Activated naive CD4-positive, alpha-beta T cell treated with anti-CD3 and anti-CD28 coated beads for 36 hours (primary cell): ENCODE measurements at regions of chr17 and their contacts with region 1.

Region 1: DNA sequence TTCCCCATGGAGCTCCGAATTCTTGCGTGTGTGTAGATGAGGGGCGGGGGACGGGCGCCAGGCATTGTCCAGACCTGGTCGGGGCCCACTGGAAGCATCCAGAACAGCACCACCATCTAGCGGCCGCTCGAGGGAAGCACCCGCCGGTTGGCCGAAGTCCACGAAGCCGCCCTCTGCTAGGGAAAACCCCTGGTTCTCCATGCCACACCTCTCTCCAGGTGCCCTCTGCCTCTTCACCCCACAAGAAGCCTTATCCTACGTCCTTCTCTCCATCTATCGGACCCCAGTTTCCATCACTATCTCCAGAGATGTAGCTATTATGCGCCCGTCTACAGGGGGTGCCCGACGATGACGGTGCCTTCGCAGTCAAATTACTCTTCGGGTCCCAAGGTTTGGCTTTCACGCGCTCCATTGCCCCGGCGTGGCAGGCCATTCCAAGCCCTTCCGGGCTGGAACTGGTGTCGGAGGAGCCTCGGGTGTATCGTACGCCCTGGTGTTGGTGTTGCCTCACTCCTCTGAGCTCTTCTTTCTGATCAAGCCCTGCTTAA is 617 bp upstream of the SENP3 start:
- DNase-seq: peak; percentile 89
- H3K4me3 Mint-ChIP-seq: peak overlapping the region; percentile 87
- H3K27ac Mint-ChIP-seq: peak overlapping the region; percentile 84
- H3K4me1 Mint-ChIP-seq: peaks cover 57% of the 10 kb centered on the region
- H3K27me3 Mint-ChIP-seq: no peaks in the 10 kb centered on the region

Region 2: DNA sequence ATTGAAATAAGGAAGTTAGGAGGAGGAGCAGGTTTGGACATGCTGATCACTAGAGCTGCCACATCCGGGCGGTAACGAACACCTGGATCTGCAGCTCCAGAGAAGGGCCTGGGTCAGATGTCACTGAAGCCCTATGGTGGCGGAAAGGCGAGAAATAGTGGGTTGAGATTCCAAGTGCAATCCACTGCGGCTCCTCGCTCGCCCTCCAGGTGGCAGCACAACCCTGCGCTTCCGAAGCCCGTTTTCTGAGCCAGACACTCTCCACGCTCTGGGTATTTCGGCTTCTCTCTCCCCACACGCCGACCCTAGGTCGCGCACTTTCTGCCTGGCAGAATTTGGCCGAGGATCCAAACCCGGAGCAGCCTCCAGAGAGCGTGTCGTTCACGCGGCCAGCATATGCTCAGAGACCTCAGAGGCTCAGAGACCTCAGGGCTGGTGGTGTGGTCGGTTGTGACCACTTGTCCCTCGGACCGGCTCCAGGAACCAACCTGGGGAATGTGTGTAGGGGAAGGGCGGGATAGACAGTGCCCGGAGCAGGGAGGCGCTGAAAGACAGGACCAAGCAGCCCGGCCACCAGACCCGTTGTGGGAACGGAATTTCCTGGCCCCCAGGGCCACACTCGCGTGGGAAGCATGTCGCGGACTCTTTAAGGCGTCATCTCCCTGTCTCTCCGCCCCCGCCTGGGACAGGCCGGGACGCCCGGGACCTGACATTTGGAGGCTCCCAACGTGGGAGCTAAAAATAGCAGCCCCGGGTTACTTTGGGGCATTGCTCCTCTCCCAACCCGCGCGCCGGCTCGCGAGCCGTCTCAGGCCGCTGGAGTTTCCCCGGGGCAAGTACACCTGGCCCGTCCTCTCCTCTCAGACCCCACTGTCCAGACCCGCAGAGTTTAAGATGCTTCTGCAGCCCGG is 280.3 kb before region 1 on chr17:
- CTCF ChIA-PET with region 1: no interaction called
- intact Hi-C with region 1: loop called (anchors 1 kb)
- DNase-seq: peak; percentile 91
- H3K4me3 Mint-ChIP-seq: peak overlapping the region; percentile 74
- H3K27ac Mint-ChIP-seq: no peak overlapping the region
- H3K4me1 Mint-ChIP-seq: peaks cover 20% of the 10 kb centered on the region
- H3K27me3 Mint-ChIP-seq: peaks cover 17% of the 10 kb centered on the region

Region 3: DNA sequence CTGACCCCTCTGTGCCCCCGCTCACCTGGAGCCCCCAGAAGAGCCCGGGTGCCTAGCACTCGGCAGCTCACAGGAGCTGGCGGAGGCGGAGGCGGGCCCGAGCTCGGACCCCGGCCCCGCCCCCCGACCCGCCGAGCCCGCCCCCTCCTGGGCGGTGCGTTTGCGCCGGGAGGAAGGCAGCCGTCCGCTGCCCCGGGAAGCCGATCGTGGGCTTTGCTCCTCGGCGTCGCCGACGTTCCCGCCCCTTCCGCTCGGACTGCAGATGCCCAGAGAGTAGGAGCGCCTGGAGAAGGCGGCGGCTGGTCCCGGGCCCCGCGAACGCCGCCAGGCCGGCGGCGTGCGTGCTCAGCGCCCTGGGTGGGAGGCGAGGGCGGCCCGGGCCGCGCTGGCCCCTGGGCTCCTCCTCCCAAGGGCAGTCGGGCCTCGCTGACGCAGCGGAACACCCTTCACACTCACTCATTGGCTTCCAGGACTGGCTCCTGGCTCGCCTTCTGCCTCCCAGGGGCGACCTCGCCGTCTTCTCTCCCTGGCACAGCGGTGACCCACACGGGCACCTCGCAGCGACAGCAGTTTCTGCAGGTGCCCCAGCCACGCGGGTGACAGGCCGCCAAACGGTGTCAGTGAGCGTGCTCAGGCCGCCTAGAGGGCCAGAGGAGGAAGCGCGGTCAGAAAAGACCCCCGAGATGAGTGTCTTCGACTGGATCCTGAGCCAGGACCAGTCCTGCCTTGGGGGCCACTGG is 166.5 kb before region 1 on chr17 and contains the start of gene PLSCR3:
- CTCF ChIA-PET with region 1: interaction called, 3 read pairs
- intact Hi-C with region 1: loop called (anchors 1 kb)
- DNase-seq: peak; percentile 80
- H3K4me3 Mint-ChIP-seq: peak within 1 kb of the TSS; percentile 95
- H3K27ac Mint-ChIP-seq: peak within 1 kb of the TSS; percentile 88
- H3K4me1 Mint-ChIP-seq: peaks cover 30% of the 10 kb centered on the region
- H3K27me3 Mint-ChIP-seq: no peaks in the 10 kb centered on the region
- total RNA-seq, gene PLSCR3: 58.6 to 59.4 TPM

Region 4: DNA sequence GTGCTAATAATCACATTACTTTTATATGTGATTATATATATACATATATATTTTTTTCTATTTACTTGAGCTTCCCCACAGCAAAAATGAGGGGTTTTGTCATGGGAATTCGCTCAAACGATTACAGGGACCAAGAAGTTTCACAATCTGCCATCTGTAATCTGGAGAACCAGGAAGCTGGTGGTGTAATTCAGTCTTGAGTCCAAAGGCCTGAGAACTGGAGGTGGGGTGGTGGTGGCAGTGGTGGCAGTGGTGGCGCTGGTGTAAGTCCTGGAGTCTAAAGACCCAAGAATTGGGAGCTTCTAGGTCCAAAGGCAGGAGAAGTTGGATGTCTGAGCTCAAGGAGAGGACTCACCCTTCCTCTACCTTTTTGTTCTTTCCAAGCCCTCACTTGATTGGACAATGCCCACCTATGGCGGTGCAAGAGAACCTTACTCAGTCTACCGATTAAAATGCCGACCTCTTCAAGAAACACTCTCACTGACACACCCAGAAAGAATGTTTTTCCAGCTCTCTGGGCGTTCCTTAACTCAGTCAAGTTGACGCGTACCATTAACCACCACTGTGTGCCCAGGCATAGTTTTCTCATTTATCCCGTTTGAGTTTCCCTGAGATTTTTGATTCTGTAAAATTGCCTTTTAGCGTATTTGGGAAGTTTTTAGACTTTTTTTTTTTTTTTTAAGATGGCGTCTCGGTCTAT is 45.0 kb before region 1 on chr17:
- CTCF ChIA-PET with region 1: interaction called, 96 read pairs
- intact Hi-C with region 1: loop called (anchors 1 kb)
- DNase-seq: no peak
- H3K4me3 Mint-ChIP-seq: no peak overlapping the region
- H3K27ac Mint-ChIP-seq: no peak overlapping the region
- H3K4me1 Mint-ChIP-seq: peaks cover 2% of the 10 kb centered on the region
- H3K27me3 Mint-ChIP-seq: no peaks in the 10 kb centered on the region

Region 5: DNA sequence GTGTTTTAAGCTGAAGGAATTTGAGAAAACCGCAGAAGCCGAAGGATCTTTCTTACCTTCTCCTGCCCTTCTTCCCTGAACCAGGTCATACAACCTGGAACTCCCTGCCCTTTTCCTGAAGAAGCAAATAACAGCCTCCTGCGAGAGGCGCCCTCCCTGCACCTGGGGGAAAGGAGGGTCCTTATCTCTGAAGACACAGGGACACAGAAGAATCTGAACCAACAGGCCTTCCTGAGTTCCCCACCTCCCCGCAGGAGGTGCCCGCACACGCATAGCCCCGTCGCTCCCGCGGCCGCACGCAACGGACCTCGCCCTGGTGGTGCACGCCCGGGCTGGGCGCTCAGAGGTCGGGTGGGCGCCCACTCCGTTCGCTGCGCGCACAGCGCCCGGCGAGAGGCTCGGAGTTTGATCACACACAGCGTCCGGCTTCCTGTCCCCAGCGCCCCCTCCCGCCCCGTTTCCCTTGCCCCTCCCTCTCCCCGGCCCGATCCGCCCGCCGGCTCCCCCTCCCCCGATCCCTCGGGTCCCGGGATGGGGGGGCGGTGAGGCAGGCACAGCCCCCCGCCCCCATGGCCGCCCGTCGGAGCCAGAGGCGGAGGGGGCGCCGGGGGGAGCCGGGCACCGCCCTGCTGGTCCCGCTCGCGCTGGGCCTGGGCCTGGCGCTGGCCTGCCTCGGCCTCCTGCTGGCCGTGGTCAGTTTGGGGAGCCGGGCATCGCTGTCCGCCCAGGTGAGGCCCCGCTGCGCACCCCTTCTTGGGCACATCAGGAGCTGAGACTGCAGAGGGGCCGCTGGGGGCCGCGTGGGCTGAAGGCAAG is 12.3 kb before region 1 on chr17 and contains the start of gene TNFSF12:
- CTCF ChIA-PET with region 1: interaction called, 14 read pairs
- intact Hi-C with region 1: loop called (anchors 1 kb)
- DNase-seq: peak; percentile 69
- H3K4me3 Mint-ChIP-seq: peak within 1 kb of the TSS; percentile 77
- H3K27ac Mint-ChIP-seq: peak within 1 kb of the TSS; percentile 33
- H3K4me1 Mint-ChIP-seq: peaks cover 47% of the 10 kb centered on the region
- H3K27me3 Mint-ChIP-seq: no peaks in the 10 kb centered on the region
- total RNA-seq, gene TNFSF12: 5.8 to 7.4 TPM

Region 6: GRCh38 chr17:7583253-7584109 is 22.4 kb after region 1 on chr17 and contains the start of gene MPDU1:
- CTCF ChIA-PET with region 1: interaction called, 13 read pairs
- intact Hi-C with region 1: loop called (anchors 1 kb)
- DNase-seq: peak; percentile 96
- H3K4me3 Mint-ChIP-seq: peak within 1 kb of the TSS; percentile 95
- H3K27ac Mint-ChIP-seq: peak within 1 kb of the TSS; percentile 100
- H3K4me1 Mint-ChIP-seq: peaks cover 58% of the 10 kb centered on the region
- H3K27me3 Mint-ChIP-seq: no peaks in the 10 kb centered on the region
- total RNA-seq, gene MPDU1: 48.8 to 53.5 TPM

Region 7: GRCh38 chr17:7614422-7615264 is 53.5 kb after region 1 on chr17 and contains the start of gene FXR2:
- CTCF ChIA-PET with region 1: no interaction called
- intact Hi-C with region 1: loop called (anchors 1 kb)
- DNase-seq: peak; percentile 100
- H3K4me3 Mint-ChIP-seq: peak within 1 kb of the TSS; percentile 83
- H3K27ac Mint-ChIP-seq: peak within 1 kb of the TSS; percentile 84
- H3K4me1 Mint-ChIP-seq: peaks cover 32% of the 10 kb centered on the region
- H3K27me3 Mint-ChIP-seq: no peaks in the 10 kb centered on the region
- total RNA-seq, gene FXR2: 29.7 to 36.8 TPM